SK-N-SH (cell line): ENCODE measurements at regions of chr2 and their contacts with region 1.

Region 1: GRCh38 chr2:202588647-202589581 is 45.9 kb upstream of the FAM117B start:
- DNase-seq: peak; percentile 80
- H3K4me3 ChIP-seq: peak overlapping the region in 1 of 2 experiments; percentile 18; a peak in 1 of 4 replicates
- H3K27ac ChIP-seq: no peak overlapping the region; a peak in 1 of 4 replicates
- H3K4me1 ChIP-seq: peaks cover 0 to 5% of the 10 kb centered on the region in 2 experiments; a peak in 1 of 4 replicates
- H3K27me3 ChIP-seq: no peaks in the 10 kb centered on the region
- CTCF ChIP-seq: peak; percentile 88
- EP300 ChIP-seq: no peak
- RAD21 ChIP-seq: peak; percentile 87

Region 2: DNA sequence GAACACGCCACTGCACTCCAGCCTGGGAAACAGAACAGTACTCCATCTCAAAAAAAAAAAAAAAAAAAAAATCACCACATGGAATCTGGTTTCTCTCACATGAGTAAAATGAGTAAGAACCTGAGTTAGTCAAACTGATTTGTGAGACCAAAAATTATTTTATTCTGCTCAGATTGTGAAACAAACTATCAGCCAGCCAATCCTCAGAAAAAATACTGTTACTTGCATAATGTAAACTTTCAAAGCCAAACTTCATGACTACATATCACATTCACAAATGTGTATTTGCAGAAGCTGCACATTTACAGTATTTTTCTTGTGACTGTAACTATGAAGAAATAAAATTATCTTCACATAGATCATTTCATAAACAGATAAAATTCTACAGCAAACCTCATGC is 373.7 kb before region 1 on chr2:
- CTCF ChIA-PET with region 1: no interaction called
- POLR2A ChIA-PET with region 1: no interaction called
- DNase-seq: no peak
- H3K4me3 ChIP-seq: no peak overlapping the region
- H3K27ac ChIP-seq: no peak overlapping the region; a peak in 1 of 4 replicates
- H3K4me1 ChIP-seq: no peaks in the 10 kb centered on the region
- H3K27me3 ChIP-seq: no peaks in the 10 kb centered on the region
- CTCF ChIP-seq: no peak
- EP300 ChIP-seq: no peak
- RAD21 ChIP-seq: no peak

Region 3: GRCh38 chr2:202541137-202541536 is 47.8 kb before region 1 on chr2:
- CTCF ChIA-PET with region 1: no interaction called
- POLR2A ChIA-PET with region 1: no interaction called
- DNase-seq: no peak
- H3K4me3 ChIP-seq: no peak overlapping the region
- H3K27ac ChIP-seq: peak overlapping the region in 1 of 2 experiments; percentile 12; a peak in 1 of 4 replicates
- H3K4me1 ChIP-seq: peaks cover 4 to 6% of the 10 kb centered on the region in 2 experiments
- H3K27me3 ChIP-seq: no peaks in the 10 kb centered on the region
- CTCF ChIP-seq: no peak
- EP300 ChIP-seq: no peak
- RAD21 ChIP-seq: no peak

Region 4: GRCh38 chr2:202602285-202602684 is 13.4 kb after region 1 on chr2:
- CTCF ChIA-PET with region 1: interaction called, 24 read pairs
- POLR2A ChIA-PET with region 1: no interaction called
- DNase-seq: no peak
- H3K4me3 ChIP-seq: no peak overlapping the region
- H3K27ac ChIP-seq: no peak overlapping the region
- H3K4me1 ChIP-seq: no peaks in the 10 kb centered on the region
- H3K27me3 ChIP-seq: no peaks in the 10 kb centered on the region
- CTCF ChIP-seq: no peak
- EP300 ChIP-seq: no peak
- RAD21 ChIP-seq: no peak

Region 5: GRCh38 chr2:202634556-202635427 is 45.9 kb after region 1 on chr2 and contains the start of gene FAM117B:
- CTCF ChIA-PET with region 1: interaction called, 19 read pairs
- POLR2A ChIA-PET with region 1: no interaction called
- DNase-seq: peak; percentile 96
- H3K4me3 ChIP-seq: peak within 1 kb of the TSS; percentile 83 to 96
- H3K27ac ChIP-seq: peak within 1 kb of the TSS; percentile 65 to 86
- H3K4me1 ChIP-seq: no peaks in the 10 kb centered on the region; a peak in 2 of 4 replicates
- H3K27me3 ChIP-seq: no peaks in the 10 kb centered on the region
- CTCF ChIP-seq: no peak
- EP300 ChIP-seq: peak in 1 of 2 experiments; percentile 15; a peak in 1 of 4 replicates
- RAD21 ChIP-seq: no peak
- polyA plus RNA-seq, gene FAM117B: 0.90 and 1.0 TPM in 2 replicates

Region 6: GRCh38 chr2:202870431-202871299 is 281.8 kb after region 1 on chr2:
- CTCF ChIA-PET with region 1: interaction called, 28 read pairs
- POLR2A ChIA-PET with region 1: no interaction called
- DNase-seq: peak; percentile 85
- H3K4me3 ChIP-seq: peak overlapping the region; percentile 90 to 91
- H3K27ac ChIP-seq: peak overlapping the region; percentile 82 to 86
- H3K4me1 ChIP-seq: no peaks in the 10 kb centered on the region; a peak in 2 of 4 replicates
- H3K27me3 ChIP-seq: no peaks in the 10 kb centered on the region
- CTCF ChIP-seq: peak; percentile 68
- EP300 ChIP-seq: no peak; a peak in 1 of 4 replicates
- RAD21 ChIP-seq: peak; percentile 66

Region 7: GRCh38 chr2:203814661-203815540 is 1226.0 kb after region 1 on chr2:
- CTCF ChIA-PET with region 1: interaction called, 32 read pairs
- POLR2A ChIA-PET with region 1: no interaction called
- DNase-seq: peak; percentile 74
- H3K4me3 ChIP-seq: peak overlapping the region; percentile 2 to 8; a peak in 1 of 4 replicates
- H3K27ac ChIP-seq: no peak overlapping the region
- H3K4me1 ChIP-seq: peaks cover 0 to 30% of the 10 kb centered on the region in 2 experiments; a peak in 3 of 4 replicates
- H3K27me3 ChIP-seq: no peaks in the 10 kb centered on the region
- CTCF ChIP-seq: peak; percentile 84
- EP300 ChIP-seq: no peak
- RAD21 ChIP-seq: peak; percentile 96